ENCODE measurements at regions of chr15 and their contacts with region 1.

Region 1: GRCh38 chr15:80776420-80777045 is 2.6 kb upstream of the CEMIP start:
- DNase-seq: peak; percentile 81
- H3K4me3 ChIP-seq: no peak overlapping the region
- H3K27ac ChIP-seq: no peak overlapping the region
- H3K4me1 ChIP-seq: peaks cover 18% of the 10 kb centered on the region
- H3K27me3 ChIP-seq: peaks cover 13 to 17% of the 10 kb centered on the region in 2 experiments
- CTCF ChIP-seq: peak; percentile 88
- POLR2A ChIP-seq: no peak

Region 2: GRCh38 chr15:80418892-80419537 is 357.5 kb before region 1 on chr15:
- CTCF ChIA-PET with region 1: interaction called, 11 read pairs
- POLR2A ChIA-PET with region 1: no interaction called
- dilution Hi-C with region 1: no loop called
- intact Hi-C with region 1: loop called (anchors 2 kb)
- DNase-seq: peak; percentile 16
- H3K4me3 ChIP-seq: no peak overlapping the region
- H3K27ac ChIP-seq: no peak overlapping the region
- H3K4me1 ChIP-seq: no peaks in the 10 kb centered on the region
- H3K27me3 ChIP-seq: peaks cover 0 to 4% of the 10 kb centered on the region in 2 experiments
- CTCF ChIP-seq: peak; percentile 63 to 73
- POLR2A ChIP-seq: no peak

Region 3: GRCh38 chr15:80567721-80568157 is 208.8 kb before region 1 on chr15:
- CTCF ChIA-PET with region 1: interaction called, 828 read pairs
- POLR2A ChIA-PET with region 1: interaction called, 8 read pairs
- dilution Hi-C with region 1: no loop called
- intact Hi-C with region 1: loop called (anchors 1 kb)
- DNase-seq: peak; percentile 88
- H3K4me3 ChIP-seq: no peak overlapping the region
- H3K27ac ChIP-seq: no peak overlapping the region
- H3K4me1 ChIP-seq: peaks cover 3% of the 10 kb centered on the region
- H3K27me3 ChIP-seq: peaks cover 0 to 4% of the 10 kb centered on the region in 2 experiments
- CTCF ChIP-seq: peak; percentile 77 to 78
- POLR2A ChIP-seq: no peak

Region 4: GRCh38 chr15:80588801-80589200 is 187.7 kb before region 1 on chr15:
- CTCF ChIA-PET with region 1: interaction called, 7 read pairs
- POLR2A ChIA-PET with region 1: no interaction called
- dilution Hi-C with region 1: no loop called
- intact Hi-C with region 1: loop called (anchors 5 kb)
- DNase-seq: peak; percentile 90
- H3K4me3 ChIP-seq: peak overlapping the region in 1 of 3 experiments; percentile 10
- H3K27ac ChIP-seq: peak overlapping the region; percentile 83
- H3K4me1 ChIP-seq: peaks cover 29% of the 10 kb centered on the region
- H3K27me3 ChIP-seq: no peaks in the 10 kb centered on the region
- CTCF ChIP-seq: no peak
- POLR2A ChIP-seq: peak; percentile 28

Region 5: GRCh38 chr15:80635953-80636352 is 140.6 kb before region 1 on chr15:
- CTCF ChIA-PET with region 1: interaction called, 10 read pairs
- POLR2A ChIA-PET with region 1: no interaction called
- dilution Hi-C with region 1: no loop called
- intact Hi-C with region 1: no loop called
- DNase-seq: no peak
- H3K4me3 ChIP-seq: no peak overlapping the region
- H3K27ac ChIP-seq: no peak overlapping the region
- H3K4me1 ChIP-seq: peaks cover 10% of the 10 kb centered on the region
- H3K27me3 ChIP-seq: peaks cover 3% of the 10 kb centered on the region in 2 experiments
- CTCF ChIP-seq: no peak
- POLR2A ChIP-seq: no peak

Region 6: DNA sequence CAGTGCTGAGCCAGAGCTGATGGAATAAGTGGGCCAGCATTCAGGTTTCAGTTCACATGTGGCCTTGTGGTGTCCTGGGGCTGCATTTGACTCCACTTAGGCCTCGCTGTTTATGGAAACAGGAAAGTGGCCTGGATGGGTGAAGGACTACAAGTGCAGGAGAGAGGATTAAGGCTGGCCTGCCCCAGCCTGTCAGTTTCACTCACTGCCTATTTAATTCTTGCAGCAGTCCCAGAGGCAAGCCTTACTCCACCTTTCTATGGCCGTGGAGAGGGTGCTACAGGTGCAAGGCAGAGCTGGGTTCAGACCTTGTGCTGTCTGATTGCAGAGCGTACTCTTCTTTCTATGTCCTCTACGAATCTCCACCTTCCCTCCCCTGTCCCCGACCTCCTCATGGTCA is 43.7 kb before region 1 on chr15:
- CTCF ChIA-PET with region 1: interaction called, 12 read pairs
- POLR2A ChIA-PET with region 1: no interaction called
- dilution Hi-C with region 1: no loop called
- intact Hi-C with region 1: no loop called
- DNase-seq: no peak
- H3K4me3 ChIP-seq: no peak overlapping the region
- H3K27ac ChIP-seq: no peak overlapping the region
- H3K4me1 ChIP-seq: no peaks in the 10 kb centered on the region
- H3K27me3 ChIP-seq: no peaks in the 10 kb centered on the region
- CTCF ChIP-seq: no peak
- POLR2A ChIP-seq: no peak

Region 7: GRCh38 chr15:80789296-80789695 is 12.8 kb after region 1 on chr15:
- CTCF ChIA-PET with region 1: interaction called, 28 read pairs
- POLR2A ChIA-PET with region 1: no interaction called
- dilution Hi-C with region 1: no loop called
- intact Hi-C with region 1: no loop called
- DNase-seq: no peak
- H3K4me3 ChIP-seq: no peak overlapping the region
- H3K27ac ChIP-seq: no peak overlapping the region
- H3K4me1 ChIP-seq: no peaks in the 10 kb centered on the region
- H3K27me3 ChIP-seq: peaks cover 0 to 4% of the 10 kb centered on the region in 2 experiments
- CTCF ChIP-seq: no peak
- POLR2A ChIP-seq: no peak

Region 8: DNA sequence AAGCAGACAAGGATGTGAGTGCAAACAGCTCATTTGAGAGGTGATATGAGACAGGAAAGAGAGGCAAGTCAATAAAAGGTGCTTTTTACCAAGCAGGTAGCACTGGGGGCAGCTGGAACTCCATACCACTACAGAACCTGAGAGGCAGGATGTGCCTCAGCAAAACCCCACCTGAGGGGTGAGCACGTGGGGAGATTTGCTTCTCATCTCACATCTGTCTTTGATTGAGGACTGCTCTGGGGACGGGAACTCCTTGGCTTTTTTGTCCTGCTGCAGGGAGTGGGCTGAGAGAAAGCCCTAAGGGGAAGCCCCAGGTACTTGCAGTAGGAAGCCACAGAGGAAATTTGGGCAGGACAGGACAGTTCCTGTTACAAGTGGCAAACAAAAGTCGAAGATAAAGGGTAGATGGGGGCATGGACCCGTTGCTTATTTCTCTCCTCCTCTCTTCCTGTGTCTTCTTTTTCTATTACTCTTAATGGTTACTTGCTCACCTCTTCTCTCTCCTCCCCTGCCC is 384.7 kb after region 1 on chr15:
- CTCF ChIA-PET with region 1: no interaction called
- POLR2A ChIA-PET with region 1: no interaction called
- dilution Hi-C with region 1: no loop called
- intact Hi-C with region 1: no loop called
- DNase-seq: no peak
- H3K4me3 ChIP-seq: no peak overlapping the region
- H3K27ac ChIP-seq: no peak overlapping the region
- H3K4me1 ChIP-seq: no peaks in the 10 kb centered on the region
- H3K27me3 ChIP-seq: peaks cover 0 to 2% of the 10 kb centered on the region in 2 experiments
- CTCF ChIP-seq: no peak
- POLR2A ChIP-seq: no peak

Measured in endothelial cell of umbilical vein (primary cell).